ENCODE measurements at regions of chr5 and their contacts with region 1.

Region 1: GRCh38 chr5:176388444-176389134 is at the starts of genes HIGD2A and NOP16:
- DNase-seq: peak; percentile 100
- ATAC-seq: peak; percentile 93
- H3K4me3 Mint-ChIP-seq: peak within 1 kb of the TSS; percentile 95
- H3K27ac Mint-ChIP-seq: peak within 1 kb of the TSS; percentile 100
- H3K4me1 Mint-ChIP-seq: peaks cover 31% of the 10 kb centered on the region
- H3K27me3 Mint-ChIP-seq: no peaks in the 10 kb centered on the region
- total RNA-seq, gene HIGD2A: 104 to 140 TPM
- total RNA-seq, gene NOP16: 54.3 to 65.4 TPM

Region 2: GRCh38 chr5:175464074-175464941 is 924.3 kb before region 1 on chr5:
- CTCF ChIA-PET with region 1: no interaction called
- POLR2A ChIA-PET with region 1: no interaction called
- intact Hi-C with region 1: no loop called
- DNase-seq: peak; percentile 84
- ATAC-seq: peak; percentile 98
- H3K4me3 Mint-ChIP-seq: no peak overlapping the region
- H3K27ac Mint-ChIP-seq: peak overlapping the region; percentile 34
- H3K4me1 Mint-ChIP-seq: peaks cover 12% of the 10 kb centered on the region
- H3K27me3 Mint-ChIP-seq: peaks cover 6% of the 10 kb centered on the region

Region 3: DNA sequence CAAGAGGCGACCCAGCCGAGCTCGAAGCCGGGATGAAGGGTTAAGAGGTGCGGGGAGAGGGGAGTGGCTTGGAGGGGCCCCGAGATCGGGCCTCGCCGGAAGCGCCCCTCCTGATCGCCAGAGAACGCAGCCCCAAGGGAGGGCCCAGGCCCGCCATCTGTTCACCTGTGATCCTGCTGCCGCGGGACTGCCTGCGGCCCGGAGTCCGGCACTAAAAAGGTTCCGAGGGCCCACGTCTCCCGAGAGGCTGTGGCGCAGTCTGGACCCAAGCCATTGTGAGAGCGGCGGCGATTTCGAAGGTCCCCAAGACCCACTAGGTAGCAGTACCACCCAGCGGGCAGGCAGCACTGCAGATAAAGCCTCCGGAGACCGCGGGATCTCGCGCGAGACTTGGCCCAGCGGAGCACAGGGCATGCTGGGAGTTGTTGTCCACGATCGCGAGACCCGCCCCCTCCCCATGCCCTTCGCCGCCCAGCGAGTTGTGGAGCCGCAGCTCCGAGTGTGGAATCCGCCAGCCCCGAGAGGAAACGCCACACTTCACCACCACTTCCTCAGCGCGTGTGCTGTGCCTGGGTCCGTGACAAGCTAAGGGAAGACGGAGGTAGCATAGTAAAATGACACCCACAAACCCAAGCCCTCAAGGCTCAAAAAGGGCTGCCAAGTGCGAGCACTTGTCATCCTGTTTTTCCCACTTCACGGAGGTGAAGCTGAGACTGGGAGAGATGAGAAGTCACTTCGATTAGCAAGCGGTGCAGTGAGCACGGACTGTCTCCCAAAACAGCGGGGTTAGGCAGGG is 27.0 kb before region 1 on chr5 and contains the start of gene KIAA1191:
- CTCF ChIA-PET with region 1: interaction called, 4 read pairs
- POLR2A ChIA-PET with region 1: interaction called, 5 read pairs
- intact Hi-C with region 1: loop called (anchors 1 kb)
- DNase-seq: peak; percentile 97
- ATAC-seq: peak; percentile 91
- H3K4me3 Mint-ChIP-seq: peak within 1 kb of the TSS; percentile 95
- H3K27ac Mint-ChIP-seq: peak within 1 kb of the TSS; percentile 94
- H3K4me1 Mint-ChIP-seq: peaks cover 32% of the 10 kb centered on the region
- H3K27me3 Mint-ChIP-seq: no peaks in the 10 kb centered on the region
- total RNA-seq, gene KIAA1191: 42.2 to 52.6 TPM

Region 4: GRCh38 chr5:177607452-177608192 is 1219.0 kb after region 1 on chr5:
- CTCF ChIA-PET with region 1: no interaction called
- POLR2A ChIA-PET with region 1: no interaction called
- intact Hi-C with region 1: no loop called
- DNase-seq: peak; percentile 82
- ATAC-seq: peak; percentile 92
- H3K4me3 Mint-ChIP-seq: no peak overlapping the region
- H3K27ac Mint-ChIP-seq: no peak overlapping the region
- H3K4me1 Mint-ChIP-seq: peaks cover 13% of the 10 kb centered on the region
- H3K27me3 Mint-ChIP-seq: no peaks in the 10 kb centered on the region

Measured in activated CD4-positive, alpha-beta T cell treated with anti-CD3 and anti-CD28 coated beads for 36 hours (primary cell).